Natural killer cell (primary cell): ENCODE measurements at regions of chr9 and their contacts with region 1.

Region 1: DNA sequence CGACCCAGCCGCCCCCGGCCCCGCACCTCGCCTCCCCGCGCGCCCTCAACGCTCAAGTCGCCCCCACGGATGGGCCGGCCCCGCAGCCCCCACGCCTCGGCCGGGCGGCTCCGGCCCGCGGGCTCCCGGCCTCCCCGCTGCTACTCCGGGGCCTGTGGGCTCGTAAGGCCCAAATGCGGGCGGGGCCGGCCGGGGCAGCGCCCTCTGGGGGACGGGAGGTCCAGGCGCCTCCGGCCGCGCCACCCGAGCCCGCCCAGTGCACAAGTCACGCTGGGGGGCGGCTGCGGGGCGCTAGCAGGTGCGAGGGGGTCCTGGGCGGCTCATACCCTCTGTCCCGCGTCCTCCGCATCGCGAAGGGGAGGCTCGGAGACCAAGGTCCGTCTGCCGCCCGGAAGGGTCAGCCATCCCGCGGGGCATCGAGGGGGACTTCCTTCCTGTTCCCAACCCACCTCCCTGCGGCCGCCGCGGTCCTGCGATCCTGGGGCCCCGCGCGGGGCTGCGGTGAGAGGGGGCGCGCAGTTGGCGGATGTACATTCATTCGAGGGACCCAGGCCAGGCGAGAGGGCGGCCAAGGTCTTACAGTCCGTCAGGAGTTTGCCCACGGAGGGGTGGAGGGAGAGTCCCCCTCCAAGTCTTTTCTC is at the start of gene CIZ1:
- DNase-seq: peak; percentile 77 to 86
- ATAC-seq: peak; percentile 85 to 96 (median 92)
- H3K4me3 ChIP-seq: peak within 1 kb of the TSS; percentile 83
- H3K4me3 Mint-ChIP-seq: peak within 1 kb of the TSS; percentile 96
- H3K27ac ChIP-seq: peak within 1 kb of the TSS; percentile 63
- H3K27ac Mint-ChIP-seq: peak within 1 kb of the TSS; percentile 82 to 90
- H3K4me1 ChIP-seq: peaks cover 24% of the 10 kb centered on the region
- H3K4me1 Mint-ChIP-seq: peaks cover 13 to 30% of the 10 kb centered on the region in 2 donors
- H3K27me3 ChIP-seq: no peaks in the 10 kb centered on the region
- H3K27me3 Mint-ChIP-seq: no peaks in the 10 kb centered on the region
- CTCF ChIP-seq: peak; percentile 73
- total RNA-seq, gene CIZ1: 152 to 165 (median 159) TPM

Region 2: DNA sequence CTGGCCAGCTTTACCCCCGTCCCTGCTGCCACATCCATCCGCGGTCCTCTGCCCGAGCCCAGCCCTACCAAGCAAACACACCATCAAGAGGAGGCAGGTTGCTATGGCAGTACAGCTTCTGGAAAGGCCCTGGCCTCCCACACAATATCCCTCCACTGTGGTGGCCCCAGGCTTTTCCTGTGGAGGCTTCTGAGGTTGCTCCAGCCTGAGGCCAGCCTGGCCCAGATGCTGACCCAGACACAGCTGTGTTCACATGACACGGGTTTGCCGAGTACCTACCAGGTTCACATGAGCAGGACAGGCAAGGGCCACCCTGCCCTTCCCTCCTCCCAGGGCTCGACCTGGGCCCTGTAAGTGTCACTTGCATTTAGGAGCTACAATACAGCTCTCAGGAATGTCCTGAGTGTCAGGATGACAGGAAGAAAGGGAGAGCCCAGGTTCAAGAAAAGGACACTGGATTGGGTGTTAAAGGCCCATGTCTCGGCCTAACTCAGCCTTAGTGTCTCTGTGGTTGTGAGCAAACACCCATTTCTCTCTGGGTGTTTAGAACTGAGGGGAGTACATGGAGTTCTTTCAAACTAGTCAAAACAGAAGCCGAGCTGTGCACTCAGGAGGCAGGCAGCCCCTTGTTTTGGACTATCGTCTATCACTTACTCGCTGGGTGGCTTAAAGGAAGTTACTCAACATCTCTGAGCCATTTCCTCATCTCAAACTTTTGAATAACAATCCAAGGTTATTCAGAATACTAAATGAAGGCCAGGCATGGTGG is 164.6 kb before region 1 on chr9:
- intact Hi-C with region 1: no loop called
- DNase-seq: peak; percentile 27 to 79
- ATAC-seq: peak; percentile 49 to 62 (median 58)
- H3K4me3 ChIP-seq: no peak overlapping the region
- H3K4me3 Mint-ChIP-seq: peak overlapping the region; percentile 73
- H3K27ac ChIP-seq: peak overlapping the region; percentile 93
- H3K27ac Mint-ChIP-seq: peak overlapping the region; percentile 95
- H3K4me1 ChIP-seq: peaks cover 89% of the 10 kb centered on the region
- H3K4me1 Mint-ChIP-seq: peaks cover 29 to 57% of the 10 kb centered on the region in 2 donors
- H3K27me3 ChIP-seq: no peaks in the 10 kb centered on the region
- H3K27me3 Mint-ChIP-seq: no peaks in the 10 kb centered on the region
- CTCF ChIP-seq: no peak

Region 3: GRCh38 chr9:128203024-128203706 is 11.6 kb after region 1 on chr9 and contains the start of gene DNM1:
- intact Hi-C with region 1: loop called (anchors 1 kb)
- DNase-seq: peak; percentile 75 to 91
- ATAC-seq: peak; percentile 98 to 99 (median 99)
- H3K4me3 ChIP-seq: peak within 1 kb of the TSS; percentile 28
- H3K4me3 Mint-ChIP-seq: peak within 1 kb of the TSS; percentile 73
- H3K27ac ChIP-seq: no peak within 1 kb of the TSS
- H3K27ac Mint-ChIP-seq: peak within 1 kb of the TSS in 1 of 2 donors; percentile 39
- H3K4me1 ChIP-seq: peaks cover 13% of the 10 kb centered on the region
- H3K4me1 Mint-ChIP-seq: peaks cover 5 to 8% of the 10 kb centered on the region in 2 donors
- H3K27me3 ChIP-seq: peaks cover 13% of the 10 kb centered on the region
- H3K27me3 Mint-ChIP-seq: peaks cover 15 to 22% of the 10 kb centered on the region in 2 donors
- CTCF ChIP-seq: peak; percentile 92
- total RNA-seq, gene DNM1: 1.4 to 8.1 (median 2.6) TPM

Region 4: DNA sequence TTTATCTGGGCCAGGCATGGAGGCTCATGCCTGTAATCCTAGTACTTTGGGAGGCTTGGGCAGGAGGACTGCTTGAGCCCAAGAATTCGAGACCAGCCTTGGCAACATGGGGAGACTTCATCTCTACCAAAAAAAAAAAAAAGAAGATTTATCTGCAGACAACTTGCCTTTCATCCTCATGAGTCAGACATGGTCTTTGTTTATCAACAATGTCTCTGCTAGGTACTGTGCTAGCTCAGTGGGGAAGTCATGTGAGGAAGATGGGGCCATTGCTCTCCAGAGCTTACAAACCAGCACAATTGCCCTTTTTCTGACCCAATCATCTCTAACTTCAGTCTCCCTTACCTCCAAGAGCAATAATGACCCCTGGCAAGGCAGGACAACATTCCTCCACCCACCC is 181.3 kb after region 1 on chr9:
- intact Hi-C with region 1: no loop called
- DNase-seq: no peak
- ATAC-seq: no peak
- H3K4me3 ChIP-seq: no peak overlapping the region
- H3K4me3 Mint-ChIP-seq: peak overlapping the region; percentile 76
- H3K27ac ChIP-seq: no peak overlapping the region
- H3K27ac Mint-ChIP-seq: peak overlapping the region; percentile 96 to 99
- H3K4me1 ChIP-seq: peaks cover 21% of the 10 kb centered on the region
- H3K4me1 Mint-ChIP-seq: peaks cover 29 to 31% of the 10 kb centered on the region in 2 donors
- H3K27me3 ChIP-seq: no peaks in the 10 kb centered on the region
- H3K27me3 Mint-ChIP-seq: no peaks in the 10 kb centered on the region
- CTCF ChIP-seq: no peak